Heart left ventricle (tissue), 16 donors: ENCODE measurements at regions of chr6 and their contacts with region 1.

Region 1: DNA sequence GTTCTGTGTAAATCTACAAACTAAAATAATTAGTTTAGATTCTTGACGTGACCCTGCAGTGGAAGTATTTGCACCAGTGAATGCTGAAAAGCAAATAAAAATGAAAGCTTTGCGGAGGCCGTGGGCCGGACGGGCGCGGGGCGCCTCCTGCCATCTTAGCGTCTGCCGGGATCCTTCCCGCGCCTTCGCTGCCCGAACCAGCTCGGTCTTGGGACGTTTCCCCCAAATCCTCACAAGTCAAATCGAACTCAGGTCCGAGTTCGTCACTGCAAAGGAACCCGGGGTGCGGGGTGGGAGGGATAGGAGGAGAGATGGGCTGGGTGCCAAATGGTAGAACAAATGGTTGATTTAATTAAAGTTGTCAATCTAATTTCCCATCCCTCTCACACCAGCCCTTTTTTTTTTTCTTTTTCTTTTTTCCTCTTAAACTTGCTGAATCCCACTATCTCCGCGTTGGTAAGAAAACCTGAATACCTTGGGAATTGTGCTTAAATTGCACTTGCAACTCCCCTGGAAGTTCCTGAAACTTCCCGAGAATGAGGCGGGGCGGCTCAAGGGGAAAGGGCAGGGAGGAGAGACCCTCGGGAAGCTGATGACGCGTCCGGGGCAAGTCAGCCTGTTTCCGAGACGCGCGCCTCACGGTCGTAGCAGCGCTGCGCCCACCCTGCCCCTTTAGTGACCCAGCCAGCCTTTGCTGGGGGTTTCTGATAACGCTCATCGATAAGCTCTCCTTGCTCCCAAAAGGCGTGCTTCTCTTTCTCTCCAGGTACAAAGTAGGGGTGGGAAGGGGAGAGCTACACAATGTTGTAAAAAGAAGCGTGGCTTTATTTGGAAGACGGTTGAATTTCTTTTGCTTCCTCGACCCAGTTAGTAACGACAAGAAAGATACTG is 1.8 kb downstream of the GJA1 start:
- DNase-seq: peak; percentile 59 to 72 (median 66)
- ATAC-seq: peak in 3 of 4 donors; percentile 46 to 66 (median 54)
- H3K4me3 ChIP-seq: peak overlapping the region; percentile 47 to 86 (median 72)
- H3K27ac ChIP-seq: peak overlapping the region; percentile 82 to 95 (median 92)
- H3K4me1 ChIP-seq: peaks cover 0 to 42% (median 6%) of the 10 kb centered on the region in 12 donors
- H3K27me3 ChIP-seq: peaks cover 0 to 22% (median 0%) of the 10 kb centered on the region in 9 donors
- CTCF ChIP-seq: no peak
- POLR2A ChIP-seq: no peak

Region 2: DNA sequence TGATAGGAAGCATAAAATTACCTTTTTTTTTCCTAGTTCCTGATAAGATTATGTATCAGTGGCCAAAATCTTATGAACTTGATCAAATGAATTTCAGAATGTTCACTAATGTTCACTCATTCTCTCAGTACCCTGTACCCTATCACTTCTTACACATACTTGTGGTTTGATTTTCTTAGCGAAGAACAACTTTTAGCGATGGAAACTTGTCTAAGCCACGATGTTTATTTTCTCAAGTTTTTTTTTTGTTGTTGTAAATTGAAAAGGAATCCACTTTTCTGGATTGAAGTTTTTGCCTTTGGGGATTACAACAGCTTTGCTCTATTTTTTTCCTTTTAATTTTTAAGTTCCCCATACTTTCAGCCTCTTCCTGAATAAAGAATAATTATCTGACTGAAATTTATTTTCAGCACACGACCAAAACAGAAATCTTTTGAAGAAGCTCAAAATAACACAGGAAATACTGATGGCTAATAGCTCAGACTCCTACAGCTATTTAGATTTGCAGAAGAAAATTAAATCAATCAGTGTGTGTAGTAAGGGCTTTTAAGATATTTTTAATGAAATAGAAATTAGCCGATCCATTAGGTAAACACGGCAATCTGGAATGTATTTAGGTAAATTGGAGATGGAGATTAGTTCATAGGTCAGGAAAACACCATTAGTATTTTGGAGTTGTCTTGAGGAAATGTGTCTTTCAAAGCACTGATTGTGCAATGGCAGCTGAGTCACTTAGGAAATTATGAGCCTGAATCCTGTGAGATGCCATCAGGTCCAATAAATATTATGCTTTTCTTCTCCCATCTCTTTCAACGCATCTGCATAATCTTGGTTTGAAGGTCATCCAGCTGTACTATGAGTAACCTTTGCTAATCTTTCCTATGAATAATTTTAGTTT is 215.8 kb after region 1 on chr6:
- intact Hi-C with region 1: loop called in 1 of 10 experiments (anchors 5 kb)
- DNase-seq: no peak
- ATAC-seq: peak; percentile 47 to 83 (median 68)
- H3K4me3 ChIP-seq: peak overlapping the region in 1 of 12 donors; percentile 1
- H3K27ac ChIP-seq: peak overlapping the region in 11 of 12 donors; percentile 23 to 80 (median 62)
- H3K4me1 ChIP-seq: peaks cover 0 to 15% (median 4%) of the 10 kb centered on the region in 12 donors
- H3K27me3 ChIP-seq: no peaks in the 10 kb centered on the region
- CTCF ChIP-seq: no peak
- POLR2A ChIP-seq: no peak

Region 3: DNA sequence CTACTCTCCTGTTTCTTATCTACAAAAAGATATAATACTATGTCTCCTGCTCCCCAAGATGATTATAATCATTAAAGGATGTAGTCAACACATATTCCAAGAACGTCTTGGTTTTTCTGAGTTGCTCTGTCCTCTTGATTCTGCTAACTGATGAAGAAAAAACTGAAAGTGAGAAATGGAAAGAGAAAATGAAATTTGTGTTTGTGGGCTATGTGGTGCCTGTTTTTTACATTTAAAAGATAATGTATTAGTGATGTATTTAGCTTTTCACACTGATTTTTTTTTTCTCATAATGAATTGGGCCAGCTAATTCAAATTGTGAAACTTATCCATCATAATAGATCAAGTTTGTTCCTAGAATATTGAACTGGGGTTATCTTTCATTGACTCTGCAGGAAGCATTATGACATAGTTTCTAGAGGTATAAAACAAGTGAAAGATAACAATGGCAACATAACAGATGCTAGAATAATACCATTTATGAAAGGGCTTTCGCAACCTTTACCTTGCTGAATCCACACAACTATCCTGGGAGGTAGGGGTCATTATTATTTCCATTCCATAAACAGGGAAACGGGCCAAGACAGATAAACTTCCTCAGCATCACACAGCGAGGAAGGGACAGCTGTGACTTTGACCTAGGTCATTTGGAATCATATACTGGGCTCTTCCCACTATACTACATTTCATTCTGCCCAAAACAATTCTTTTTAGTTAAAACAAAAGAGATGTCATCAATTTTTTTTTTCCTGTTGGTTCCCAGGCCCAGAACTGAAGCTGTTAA is 334.9 kb after region 1 on chr6:
- intact Hi-C with region 1: loop called in 2 of 10 experiments (anchors 5 kb)
- DNase-seq: no peak
- ATAC-seq: peak in 1 of 4 donors; percentile 47
- H3K4me3 ChIP-seq: no peak overlapping the region
- H3K27ac ChIP-seq: peak overlapping the region in 2 of 12 donors; percentile 15 to 50
- H3K4me1 ChIP-seq: peaks cover 0 to 20% (median 0%) of the 10 kb centered on the region in 12 donors
- H3K27me3 ChIP-seq: no peaks in the 10 kb centered on the region
- CTCF ChIP-seq: no peak
- POLR2A ChIP-seq: no peak

Region 4: DNA sequence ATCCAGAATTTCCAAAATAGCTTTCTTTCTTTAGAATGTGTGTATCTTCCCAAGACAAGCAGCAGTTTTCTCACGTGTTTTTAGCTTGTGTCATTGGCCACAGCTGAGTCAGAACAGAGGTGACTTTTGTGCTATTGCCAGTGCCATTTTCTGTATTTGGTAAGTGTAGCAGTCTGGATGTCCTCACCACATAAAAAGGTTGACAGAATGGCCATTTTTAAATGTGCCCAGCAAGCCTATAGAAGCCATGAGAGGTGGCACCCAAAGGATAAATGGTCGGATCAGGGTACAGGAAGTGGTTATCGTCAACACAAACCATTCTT is 692.8 kb after region 1 on chr6:
- intact Hi-C with region 1: loop called in 2 of 10 experiments (anchors 2 to 5 kb)
- DNase-seq: peak in 4 of 5 donors; percentile 31 to 39 (median 38)
- ATAC-seq: peak; percentile 75 to 87 (median 82)
- H3K4me3 ChIP-seq: no peak overlapping the region
- H3K27ac ChIP-seq: peak overlapping the region; percentile 57 to 91 (median 80)
- H3K4me1 ChIP-seq: peaks cover 0 to 23% (median 0%) of the 10 kb centered on the region in 12 donors
- H3K27me3 ChIP-seq: no peaks in the 10 kb centered on the region
- CTCF ChIP-seq: no peak
- POLR2A ChIP-seq: no peak